Heart right ventricle (tissue), 16 donors: ENCODE measurements at regions of chr4 and their contacts with region 1.

Region 1: DNA sequence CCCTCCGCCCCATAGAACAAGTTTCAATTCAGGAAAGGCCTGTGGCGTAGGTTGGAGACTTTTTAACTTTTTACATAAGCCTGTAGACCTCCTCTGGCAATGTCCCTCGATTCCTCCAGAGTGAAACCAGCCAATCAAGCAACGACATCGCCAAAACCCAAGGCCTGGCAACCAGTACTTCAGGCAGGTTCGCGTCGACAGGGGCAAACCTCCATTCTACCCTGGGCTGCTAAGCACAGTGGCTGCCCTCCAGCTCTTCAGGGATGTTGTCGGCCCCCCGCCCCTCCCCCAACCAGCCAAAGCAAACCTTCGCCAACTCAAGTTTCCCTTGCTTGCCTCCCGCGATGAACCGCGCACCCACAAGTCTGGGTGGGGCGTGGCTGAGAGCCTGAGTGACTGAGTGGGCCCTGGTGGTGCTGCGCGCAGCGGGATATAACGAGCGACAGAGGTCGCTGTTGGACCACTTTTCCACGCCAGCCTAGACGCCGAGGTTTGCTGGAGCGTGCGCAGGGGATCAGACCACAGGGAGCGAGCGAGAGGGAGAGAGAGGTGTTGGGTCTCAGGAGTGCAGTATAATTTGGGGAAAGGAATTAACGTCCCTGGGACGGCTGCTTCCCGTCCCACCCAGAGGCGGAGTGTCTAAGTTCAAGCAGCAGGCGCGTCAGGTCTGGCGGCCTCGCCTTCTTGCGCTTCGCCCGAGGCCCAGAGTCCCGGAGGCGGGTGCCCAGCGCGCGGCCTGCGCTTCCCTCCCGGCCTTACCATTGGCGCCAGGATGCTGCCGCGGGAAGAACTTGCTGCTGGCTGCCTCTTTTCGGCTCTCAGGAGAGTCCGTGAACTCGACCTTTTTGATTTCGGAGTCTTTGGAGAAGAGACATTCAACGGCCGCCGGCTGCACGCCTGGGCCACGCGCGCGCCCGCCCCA is 9.0 kb upstream of the PITX2 start:
- DNase-seq: peak; percentile 45 to 52
- ATAC-seq: peak; percentile 85 to 96 (median 94)
- H3K4me3 ChIP-seq: peak overlapping the region in 9 of 10 donors; percentile 1 to 34 (median 23)
- H3K27ac ChIP-seq: no peak overlapping the region
- H3K4me1 ChIP-seq: peaks cover 2 to 36% (median 21%) of the 10 kb centered on the region in 9 donors
- H3K27me3 ChIP-seq: peaks cover 81 to 100% (median 100%) of the 10 kb centered on the region in 7 donors
- CTCF ChIP-seq: peak in 8 of 9 donors; percentile 24 to 72 (median 64)

Region 2: DNA sequence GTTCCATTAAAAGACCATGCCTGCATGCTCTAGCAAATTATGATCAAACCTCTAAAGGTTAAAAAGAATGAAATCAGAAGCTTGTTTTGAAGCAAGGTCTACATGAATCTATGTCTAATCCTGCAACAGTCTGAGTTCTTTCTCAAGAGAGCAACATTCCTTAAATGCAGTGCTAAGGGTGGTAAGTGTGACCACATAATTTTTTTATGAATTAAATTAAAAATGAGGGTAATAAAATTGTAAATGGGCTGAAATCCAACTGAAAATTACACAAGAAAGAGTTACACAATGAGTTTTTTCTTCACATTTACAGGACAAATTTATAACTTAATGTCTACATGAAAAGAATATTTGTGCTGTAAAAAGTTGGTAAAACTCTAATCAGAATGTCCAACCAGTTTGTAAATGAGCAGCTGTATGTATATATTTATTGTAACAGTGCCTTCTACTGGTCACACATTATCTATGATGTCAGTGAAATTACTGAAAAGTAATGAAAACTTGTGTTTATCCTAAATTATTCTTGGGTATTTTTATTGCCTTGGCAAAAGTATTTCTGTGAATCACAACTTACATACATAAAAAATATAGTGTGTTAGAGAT is 327.3 kb after region 1 on chr4:
- intact Hi-C with region 1: loop called in 6 of 10 experiments (anchors 2 to 10 kb)
- DNase-seq: no peak
- ATAC-seq: no peak
- H3K4me3 ChIP-seq: no peak overlapping the region
- H3K27ac ChIP-seq: no peak overlapping the region
- H3K4me1 ChIP-seq: no peaks in the 10 kb centered on the region
- H3K27me3 ChIP-seq: peaks cover 0 to 19% (median 0%) of the 10 kb centered on the region in 7 donors
- CTCF ChIP-seq: peak in 6 of 9 donors; percentile 6 to 42 (median 22)

Region 3: DNA sequence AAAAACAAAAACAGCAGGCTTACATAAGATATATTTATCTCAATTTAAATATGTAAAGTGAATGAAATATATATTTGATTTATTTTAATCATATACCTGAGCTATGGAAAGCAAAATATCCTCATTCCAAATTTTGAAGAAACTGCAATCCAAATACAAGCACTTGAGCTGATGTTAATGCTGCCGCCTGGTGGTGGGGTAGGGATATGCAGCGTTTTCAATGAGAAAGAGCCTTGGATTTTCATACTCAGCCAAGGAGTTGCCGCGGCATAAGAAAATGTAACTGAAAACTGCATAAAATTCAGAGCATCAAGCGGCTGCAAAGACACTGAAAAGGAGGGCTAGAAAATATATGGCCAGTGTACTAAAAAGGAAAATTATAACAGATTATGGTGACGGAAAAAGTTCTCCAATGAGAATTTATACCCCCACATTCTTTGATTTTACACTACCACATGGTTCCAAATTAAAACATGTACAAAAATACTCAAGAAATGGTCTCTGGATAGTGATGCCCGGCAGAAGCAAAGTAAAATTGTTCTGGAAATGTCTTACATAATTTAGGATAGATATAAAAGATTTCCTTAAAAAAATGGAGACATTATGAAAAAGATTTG is 651.3 kb after region 1 on chr4:
- intact Hi-C with region 1: loop called in 5 of 10 experiments (anchors 5 to 10 kb)
- DNase-seq: peak; percentile 7 to 21
- ATAC-seq: no peak
- H3K4me3 ChIP-seq: no peak overlapping the region
- H3K27ac ChIP-seq: no peak overlapping the region
- H3K4me1 ChIP-seq: no peaks in the 10 kb centered on the region
- H3K27me3 ChIP-seq: no peaks in the 10 kb centered on the region
- CTCF ChIP-seq: peak; percentile 32 to 81 (median 66)

Region 4: GRCh38 chr4:111475001-111475400 is 843.2 kb after region 1 on chr4:
- intact Hi-C with region 1: loop called in 4 of 10 experiments (anchors 5 to 10 kb)
- DNase-seq: peak in 1 of 2 donors; percentile 13
- ATAC-seq: peak in 2 of 8 donors; percentile 55 to 56
- H3K4me3 ChIP-seq: no peak overlapping the region
- H3K27ac ChIP-seq: no peak overlapping the region
- H3K4me1 ChIP-seq: no peaks in the 10 kb centered on the region
- H3K27me3 ChIP-seq: no peaks in the 10 kb centered on the region
- CTCF ChIP-seq: peak in 8 of 9 donors; percentile 7 to 68 (median 54)

Region 5: DNA sequence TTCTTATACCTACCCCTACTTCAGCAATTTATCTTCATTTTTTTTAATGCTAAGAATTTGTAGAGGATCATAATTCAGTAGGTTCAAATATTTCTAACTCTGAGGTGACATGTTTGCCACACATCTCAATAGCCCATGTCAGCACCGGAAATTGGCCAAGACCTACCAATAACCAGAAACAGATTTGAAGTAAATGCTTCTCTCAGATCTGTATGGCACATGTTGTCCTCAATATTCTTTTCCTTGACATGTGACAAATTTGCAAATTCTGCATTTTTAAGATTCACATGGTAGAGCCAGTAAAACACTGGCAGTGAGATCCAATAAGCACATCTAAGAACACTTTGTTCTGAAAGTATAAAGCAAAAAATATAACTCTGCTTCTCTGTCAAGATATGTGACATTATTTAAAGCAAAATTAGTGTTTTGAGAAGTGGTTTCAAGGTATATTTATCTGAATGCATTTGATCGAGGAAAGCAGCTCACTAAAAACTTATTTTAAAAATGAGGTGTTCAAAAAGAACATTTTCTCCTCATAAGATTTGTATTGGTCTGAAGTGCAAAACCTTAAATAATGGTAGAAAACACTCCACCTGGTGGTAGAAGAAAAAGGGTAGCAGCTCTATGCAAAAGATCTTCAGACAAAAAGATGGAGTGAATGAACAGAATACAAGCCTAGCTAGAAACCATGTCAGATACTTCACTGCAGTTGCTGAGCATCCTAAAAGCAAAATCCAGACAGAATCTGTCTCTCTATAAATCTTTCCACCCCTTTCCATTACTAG is 999.6 kb after region 1 on chr4:
- intact Hi-C with region 1: loop called in 4 of 10 experiments (anchors 5 to 10 kb)
- DNase-seq: no peak
- ATAC-seq: no peak
- H3K4me3 ChIP-seq: no peak overlapping the region
- H3K27ac ChIP-seq: no peak overlapping the region
- H3K4me1 ChIP-seq: no peaks in the 10 kb centered on the region
- H3K27me3 ChIP-seq: peaks cover 0 to 67% (median 6%) of the 10 kb centered on the region in 7 donors
- CTCF ChIP-seq: peak in 5 of 9 donors; percentile 18 to 41 (median 25)

Region 6: GRCh38 chr4:111641955-111642579 is 1010.2 kb after region 1 on chr4:
- intact Hi-C with region 1: loop called in 3 of 10 experiments (anchors 5 to 10 kb)
- DNase-seq: peak in 1 of 2 donors; percentile 49
- ATAC-seq: peak in 4 of 8 donors; percentile 28 to 76 (median 60)
- H3K4me3 ChIP-seq: no peak overlapping the region
- H3K27ac ChIP-seq: no peak overlapping the region
- H3K4me1 ChIP-seq: no peaks in the 10 kb centered on the region
- H3K27me3 ChIP-seq: peaks cover 0 to 9% (median 0%) of the 10 kb centered on the region in 7 donors
- CTCF ChIP-seq: peak; percentile 30 to 83 (median 66)

Region 7: GRCh38 chr4:111854494-111855087 is 1222.7 kb after region 1 on chr4:
- intact Hi-C with region 1: loop called in 1 of 10 experiments (anchors 10 kb)
- DNase-seq: peak in 1 of 2 donors; percentile 4
- ATAC-seq: no peak
- H3K4me3 ChIP-seq: no peak overlapping the region
- H3K27ac ChIP-seq: no peak overlapping the region
- H3K4me1 ChIP-seq: no peaks in the 10 kb centered on the region
- H3K27me3 ChIP-seq: peaks cover 0 to 13% (median 0%) of the 10 kb centered on the region in 7 donors
- CTCF ChIP-seq: peak; percentile 16 to 62 (median 45)